OCI-LY7 (cell line): ENCODE measurements at regions of chr1 and their contacts with region 1.

Region 1: DNA sequence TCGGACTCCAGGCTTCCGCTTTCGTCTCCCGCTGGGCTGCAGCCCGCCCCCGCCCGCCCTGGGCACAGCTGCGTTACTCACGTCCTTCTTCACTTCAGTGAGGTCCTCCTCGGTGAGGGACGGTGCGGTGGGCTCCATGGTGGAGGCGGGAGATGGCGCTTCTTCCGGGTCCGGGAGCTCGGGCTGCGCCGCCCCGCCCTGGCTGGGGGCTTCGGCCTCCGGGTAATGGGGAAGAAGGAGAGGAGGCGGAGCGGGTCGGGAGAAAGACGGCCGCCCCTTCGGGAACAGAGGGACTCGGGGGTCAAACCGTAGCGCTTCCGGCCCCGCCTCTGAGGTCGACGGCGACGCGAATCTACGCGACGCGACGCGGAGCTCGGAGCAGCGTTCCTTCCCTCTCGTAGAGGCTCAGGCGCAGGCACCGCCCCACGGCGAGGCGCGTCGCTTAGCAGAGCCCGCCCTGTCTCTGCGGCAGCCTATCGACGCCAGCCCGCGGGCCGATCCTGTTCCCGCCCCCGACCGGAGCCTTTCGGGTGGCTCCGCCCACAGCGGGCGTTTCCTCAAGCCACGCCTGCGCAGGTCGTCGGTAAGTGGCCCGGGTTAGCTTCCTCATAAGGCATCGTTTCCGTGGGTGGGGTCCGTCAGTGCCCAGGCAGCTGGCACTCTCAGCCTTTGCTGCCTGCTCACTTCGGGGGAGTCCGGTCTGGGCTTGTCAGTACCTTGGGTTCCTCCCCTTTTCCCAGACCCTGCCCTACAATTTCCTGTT is at the start of gene BCL10:
- DNase-seq: peak; percentile 98
- H3K4me3 ChIP-seq: peak within 1 kb of the TSS; percentile 96
- H3K27ac ChIP-seq: peak within 1 kb of the TSS; percentile 82
- H3K4me1 ChIP-seq: peaks cover 25% of the 10 kb centered on the region
- CTCF ChIP-seq: no peak
- total RNA-seq, gene BCL10: 10.6 and 17.4 TPM in 2 replicates

Region 2: GRCh38 chr1:84690397-84691121 is 585.8 kb before region 1 on chr1 and contains the start of gene SSX2IP:
- CTCF ChIA-PET with region 1: no interaction called
- POLR2A ChIA-PET with region 1: no interaction called
- intact Hi-C with region 1: loop called (anchors 10 kb)
- DNase-seq: peak; percentile 97
- H3K4me3 ChIP-seq: peak within 1 kb of the TSS; percentile 84
- H3K27ac ChIP-seq: peak within 1 kb of the TSS; percentile 77
- H3K4me1 ChIP-seq: peaks cover 48% of the 10 kb centered on the region
- CTCF ChIP-seq: no peak
- total RNA-seq, gene SSX2IP: 24.1 and 29.9 TPM in 2 replicates

Region 3: GRCh38 chr1:84823511-84823910 is 452.9 kb before region 1 on chr1:
- CTCF ChIA-PET with region 1: no interaction called
- POLR2A ChIA-PET with region 1: no interaction called
- intact Hi-C with region 1: no loop called
- DNase-seq: no peak
- H3K4me3 ChIP-seq: no peak overlapping the region
- H3K27ac ChIP-seq: no peak overlapping the region
- H3K4me1 ChIP-seq: no peaks in the 10 kb centered on the region
- CTCF ChIP-seq: no peak

Region 4: GRCh38 chr1:84973498-84974334 is 302.7 kb before region 1 on chr1:
- CTCF ChIA-PET with region 1: no interaction called
- POLR2A ChIA-PET with region 1: interaction called, 4 read pairs
- intact Hi-C with region 1: loop called (anchors 5 kb)
- DNase-seq: peak; percentile 61
- H3K4me3 ChIP-seq: peak overlapping the region; percentile 26
- H3K27ac ChIP-seq: peak overlapping the region; percentile 54
- H3K4me1 ChIP-seq: peaks cover 52% of the 10 kb centered on the region
- CTCF ChIP-seq: peak; percentile 67

Region 5: DNA sequence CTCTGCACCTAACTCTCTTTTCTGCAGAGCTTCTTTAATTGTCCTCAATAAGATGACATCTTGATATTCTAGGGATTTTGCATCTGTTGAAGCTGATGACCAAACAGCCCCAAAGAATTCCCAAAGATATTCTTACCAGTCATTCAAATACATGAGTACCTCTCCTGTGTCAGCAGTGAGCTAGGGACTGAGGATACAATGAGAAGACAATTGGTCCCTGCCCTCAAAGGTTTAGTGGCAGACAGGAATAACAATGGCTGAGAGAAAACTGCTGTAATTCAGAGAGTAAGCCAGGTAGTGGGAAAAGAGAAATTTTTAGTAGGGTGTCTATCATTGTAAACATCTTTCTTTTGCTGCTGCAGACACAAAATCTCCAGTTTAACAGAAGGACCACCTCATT is 234.0 kb before region 1 on chr1:
- CTCF ChIA-PET with region 1: no interaction called
- POLR2A ChIA-PET with region 1: no interaction called
- intact Hi-C with region 1: no loop called
- DNase-seq: no peak
- H3K4me3 ChIP-seq: no peak overlapping the region
- H3K27ac ChIP-seq: no peak overlapping the region
- H3K4me1 ChIP-seq: no peaks in the 10 kb centered on the region
- CTCF ChIP-seq: no peak

Region 6: DNA sequence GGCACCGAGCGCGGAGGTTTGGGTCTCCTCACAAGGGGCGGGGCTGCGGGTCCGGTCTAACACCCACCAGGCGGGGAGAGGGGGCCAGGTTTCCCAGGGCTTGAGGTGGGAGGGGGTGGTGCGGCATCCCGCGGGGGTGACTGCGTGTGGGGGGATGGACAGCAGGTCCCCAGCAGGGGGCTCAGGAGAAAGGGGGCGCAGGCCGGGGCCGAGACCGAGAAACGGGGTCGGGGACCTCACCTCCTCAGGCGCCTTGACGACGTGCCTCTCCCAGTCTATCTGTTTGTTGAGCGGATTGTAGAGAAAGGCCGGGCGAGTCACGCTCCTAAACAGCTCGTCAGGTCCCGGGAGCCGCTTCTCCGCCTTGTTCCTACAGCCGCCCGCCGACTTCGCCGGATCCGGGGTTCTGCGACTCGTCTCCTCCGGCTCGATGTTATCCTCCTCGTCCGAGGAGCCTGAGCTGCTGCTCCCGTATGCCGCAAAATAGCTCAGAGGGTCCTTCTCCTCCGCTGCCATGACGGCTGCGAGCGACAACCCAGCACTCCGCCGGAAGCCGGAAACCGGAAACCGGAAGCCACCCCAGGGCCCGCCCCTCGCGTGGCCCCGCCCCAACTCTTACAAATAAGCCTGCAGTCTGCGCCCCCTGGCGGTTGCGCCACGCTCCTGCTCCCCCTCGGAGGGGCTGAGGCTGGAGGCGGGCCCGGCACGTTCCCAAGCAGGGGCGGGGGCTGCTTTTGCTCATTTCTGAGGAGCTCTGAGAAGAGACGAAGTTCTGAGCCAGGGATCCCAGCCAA is 17.1 kb before region 1 on chr1 and contains the start of gene C1orf52:
- CTCF ChIA-PET with region 1: interaction called, 9 read pairs
- POLR2A ChIA-PET with region 1: interaction called, 34 read pairs
- intact Hi-C with region 1: loop called (anchors 2 kb)
- DNase-seq: peak; percentile 95
- H3K4me3 ChIP-seq: peak within 1 kb of the TSS; percentile 98
- H3K27ac ChIP-seq: peak within 1 kb of the TSS; percentile 47
- H3K4me1 ChIP-seq: peaks cover 19% of the 10 kb centered on the region
- CTCF ChIP-seq: peak; percentile 90
- total RNA-seq, gene C1orf52: 35.6 and 55.3 TPM in 2 replicates

Region 7: DNA sequence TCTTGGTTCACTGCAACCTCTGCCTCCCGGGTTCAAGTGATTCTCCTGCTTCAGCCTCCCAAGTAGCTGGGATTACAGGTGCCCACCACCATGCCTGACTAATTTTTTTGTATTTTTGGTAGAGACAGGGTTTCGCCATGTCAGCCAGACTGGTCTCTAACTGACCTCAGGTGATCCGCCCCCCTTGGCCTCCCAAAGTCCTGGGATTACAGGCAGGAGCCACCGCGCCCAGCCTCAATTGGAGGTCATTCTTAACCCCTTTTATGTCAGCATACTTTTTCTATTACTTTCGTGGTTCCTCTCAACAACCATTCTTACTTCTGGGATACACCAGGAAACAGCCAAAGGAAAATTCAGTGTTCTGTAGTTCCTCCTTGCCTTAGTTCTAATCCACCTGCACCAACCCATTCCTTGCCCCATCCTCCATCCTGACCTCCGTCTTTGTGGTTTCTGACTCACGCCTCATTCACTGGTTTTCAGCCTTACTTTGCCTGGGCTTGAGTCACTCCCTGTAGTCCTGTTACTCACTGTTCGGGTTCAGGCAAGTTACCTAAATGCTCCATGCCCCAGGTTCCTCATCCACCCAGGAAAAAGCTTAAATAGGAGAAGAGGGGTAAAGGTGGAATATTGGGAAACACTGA is 12.9 kb after region 1 on chr1:
- CTCF ChIA-PET with region 1: no interaction called
- POLR2A ChIA-PET with region 1: interaction called, 13 read pairs
- intact Hi-C with region 1: no loop called
- DNase-seq: no peak
- H3K4me3 ChIP-seq: no peak overlapping the region
- H3K27ac ChIP-seq: peak overlapping the region; percentile 12
- H3K4me1 ChIP-seq: peaks cover 19% of the 10 kb centered on the region
- CTCF ChIP-seq: no peak

Region 8: DNA sequence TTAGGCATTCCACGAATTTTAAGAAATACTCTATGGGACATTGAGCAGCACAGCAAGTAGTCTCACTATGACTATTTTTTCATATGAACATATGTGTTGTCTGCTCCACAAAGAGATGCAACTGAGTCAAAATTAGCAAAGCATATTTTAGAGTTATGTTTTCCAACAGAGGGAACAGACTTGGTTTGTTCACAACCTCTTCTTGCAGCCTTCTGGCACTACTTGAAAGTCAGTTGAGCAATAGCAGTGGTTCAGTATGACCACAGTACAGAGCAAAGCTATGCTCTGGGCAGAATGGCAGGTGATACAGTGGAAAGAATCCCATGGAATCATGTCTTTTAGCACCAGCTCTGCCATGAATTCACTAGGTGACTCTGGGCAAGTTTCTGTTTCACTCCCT is 309.4 kb after region 1 on chr1:
- CTCF ChIA-PET with region 1: no interaction called
- POLR2A ChIA-PET with region 1: no interaction called
- intact Hi-C with region 1: no loop called
- DNase-seq: no peak
- H3K4me3 ChIP-seq: no peak overlapping the region
- H3K27ac ChIP-seq: no peak overlapping the region
- H3K4me1 ChIP-seq: no peaks in the 10 kb centered on the region
- CTCF ChIP-seq: no peak